ENCODE measurements at regions of chr11 and their contacts with region 1.

Region 1: DNA sequence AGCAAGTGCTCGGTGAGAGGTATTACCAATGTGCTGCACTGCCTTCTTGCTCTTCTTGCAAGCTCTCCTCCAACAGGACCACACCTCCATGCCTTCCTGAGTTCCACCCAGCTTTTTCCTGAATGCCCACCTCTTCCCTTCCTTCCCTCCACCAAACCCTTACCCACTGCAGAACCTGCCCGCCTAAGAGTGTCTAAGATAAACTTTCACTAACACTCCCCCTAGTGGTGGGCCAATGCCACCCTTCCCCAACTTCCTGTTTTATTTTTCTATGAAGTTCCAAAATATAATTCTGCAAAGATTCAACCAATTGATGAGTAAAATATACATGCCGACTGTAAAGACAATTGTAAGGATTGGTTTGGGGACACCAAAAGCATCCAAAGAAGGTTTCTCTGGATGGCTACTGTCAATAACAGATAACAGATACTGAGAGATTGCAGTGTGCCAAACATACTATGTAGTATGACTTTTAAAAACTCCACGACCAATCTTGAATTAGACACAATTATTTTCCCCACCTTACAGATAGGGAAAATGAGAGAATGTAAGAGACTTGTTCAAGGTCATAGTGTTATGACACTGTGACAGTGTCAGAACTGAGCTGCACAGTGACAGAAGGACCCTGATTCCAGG is 38.6 kb upstream of the BMAL1 start:
- DNase-seq: peak in 1 of 4 donors; percentile 48
- ATAC-seq: peak; percentile 88
- H3K4me3 ChIP-seq: no peak overlapping the region
- H3K27ac ChIP-seq: no peak overlapping the region
- H3K4me1 ChIP-seq: no peaks in the 10 kb centered on the region
- H3K27me3 ChIP-seq: peaks cover 0 to 5% of the 10 kb centered on the region in 2 donors
- CTCF ChIP-seq: peak; percentile 72 to 78

Region 2: DNA sequence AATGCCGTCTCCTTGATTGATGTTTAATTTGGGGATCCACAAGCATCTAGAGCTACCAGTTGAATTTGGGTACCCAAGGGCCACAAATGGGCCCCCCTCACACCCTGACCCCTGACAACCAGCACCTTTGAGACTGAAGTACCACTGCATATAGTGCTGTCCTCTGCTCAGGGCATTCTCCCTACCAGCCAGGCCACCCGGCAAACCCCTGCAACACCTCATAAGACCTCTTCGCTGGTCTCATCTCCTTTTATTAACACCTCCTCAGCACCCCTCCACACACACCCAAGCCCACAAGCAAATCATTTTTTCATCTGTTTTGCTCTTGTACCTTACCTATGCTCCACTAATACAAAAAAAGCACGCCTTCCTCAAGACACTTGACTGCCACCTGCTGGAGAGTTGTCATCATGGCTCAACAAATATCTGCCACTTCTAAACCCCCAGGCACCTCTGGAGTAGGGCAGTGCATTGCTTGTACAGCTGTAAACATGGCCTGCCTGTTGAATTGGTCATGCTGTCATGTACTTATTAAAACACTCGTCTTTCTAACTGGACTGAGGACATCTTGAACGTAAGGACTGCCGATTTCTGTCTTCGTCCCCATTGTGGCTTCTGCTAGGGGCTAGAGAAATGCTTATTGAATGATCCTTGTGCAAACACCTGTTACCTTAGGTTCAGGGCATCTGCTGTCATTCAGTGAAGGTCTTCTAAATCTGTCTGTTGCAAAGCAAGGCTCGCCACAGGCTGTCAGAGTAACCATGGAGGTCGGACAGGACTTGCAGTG is 105.1 kb after region 1 on chr11:
- intact Hi-C with region 1: loop called in 1 of 2 experiments (anchors 10 kb)
- DNase-seq: peak in 3 of 4 donors; percentile 52 to 75 (median 52)
- ATAC-seq: peak; percentile 80
- H3K4me3 ChIP-seq: no peak overlapping the region
- H3K27ac ChIP-seq: no peak overlapping the region
- H3K4me1 ChIP-seq: peaks cover 4 to 22% of the 10 kb centered on the region in 2 donors
- H3K27me3 ChIP-seq: no peaks in the 10 kb centered on the region
- CTCF ChIP-seq: peak; percentile 63 to 74

Measured in left lung (tissue), 14 donors.